PC-9 (cell line): ENCODE measurements at regions of chr3 and their contacts with region 1.

Region 1: DNA sequence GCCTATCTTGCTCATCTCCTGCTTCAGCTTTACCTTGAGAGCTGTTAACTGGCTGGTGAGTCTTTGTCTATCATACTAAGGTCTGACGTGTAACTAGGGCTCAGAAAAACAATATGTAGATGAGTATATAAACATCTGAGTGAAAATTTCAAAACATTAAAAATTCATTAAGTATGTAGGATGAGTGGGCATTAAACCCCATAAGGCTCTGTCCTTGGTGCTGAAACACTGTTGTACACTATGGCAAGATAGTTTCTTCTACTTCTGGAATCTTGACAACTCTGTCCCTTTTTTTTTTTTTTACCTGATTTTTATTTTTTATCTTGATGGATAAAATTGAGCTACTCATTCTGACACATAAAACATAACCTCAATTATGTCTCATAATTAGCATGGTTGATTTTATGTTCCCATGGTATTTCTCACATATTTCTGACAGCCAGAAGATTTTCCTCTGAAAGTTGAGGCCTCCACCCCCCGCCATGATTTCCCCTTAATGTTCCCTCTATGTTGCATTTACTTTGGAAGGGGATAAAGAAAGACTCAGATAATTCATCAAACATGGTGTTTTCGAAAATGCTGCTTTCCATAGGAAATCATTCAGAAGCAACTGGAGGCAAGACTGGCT is 54.3 kb downstream of the DGKG start:
- DNase-seq: no peak
- H3K4me3 ChIP-seq: no peak overlapping the region
- H3K27ac ChIP-seq: no peak overlapping the region
- H3K4me1 ChIP-seq: no peaks in the 10 kb centered on the region
- H3K27me3 ChIP-seq: peaks cover 72% of the 10 kb centered on the region
- CTCF ChIP-seq: no peak

Region 2: GRCh38 chr3:186283096-186283495 is 24.6 kb before region 1 on chr3:
- CTCF ChIA-PET with region 1: no interaction called
- POLR2A ChIA-PET with region 1: interaction called, 13 read pairs
- intact Hi-C with region 1: no loop called
- DNase-seq: no peak
- H3K4me3 ChIP-seq: no peak overlapping the region
- H3K27ac ChIP-seq: no peak overlapping the region
- H3K4me1 ChIP-seq: no peaks in the 10 kb centered on the region
- H3K27me3 ChIP-seq: peaks cover 92% of the 10 kb centered on the region
- CTCF ChIP-seq: no peak